Caco-2 (cell line): ENCODE measurements at regions of chr3 and their contacts with region 1.

Region 1: DNA sequence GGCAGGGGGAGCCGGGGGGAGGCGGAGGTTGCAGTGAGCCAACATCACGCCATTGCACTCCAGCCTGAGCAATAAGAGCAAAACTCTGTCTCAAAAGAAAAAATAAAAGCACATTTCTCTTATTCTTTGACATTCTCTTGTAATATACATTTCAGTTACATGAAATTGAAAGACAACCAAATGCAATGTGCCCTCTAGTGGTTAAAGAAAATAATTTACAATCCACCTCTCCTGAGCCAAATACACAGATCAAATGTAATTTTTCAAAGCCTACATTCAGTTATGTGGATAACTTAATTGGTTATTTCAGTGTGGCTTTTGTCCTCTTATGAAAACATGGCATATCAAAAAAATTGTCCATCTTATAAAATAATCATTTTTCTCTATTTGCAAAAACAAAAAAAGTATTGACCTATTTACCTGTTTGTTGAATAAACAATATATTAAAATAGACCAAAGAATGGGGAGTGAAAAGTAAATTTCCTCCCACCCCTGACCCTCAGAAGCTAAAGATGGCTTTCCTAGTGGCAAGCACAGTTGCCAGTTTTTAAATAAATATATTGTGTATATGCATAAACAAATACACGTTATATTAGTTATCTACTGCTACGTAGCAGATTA is 14.2 kb upstream of the U2SURP start:
- DNase-seq: no peak
- H3K4me3 ChIP-seq: no peak overlapping the region
- H3K4me3 Mint-ChIP-seq: no peak overlapping the region
- H3K27ac Mint-ChIP-seq: no peak overlapping the region
- H3K4me1 ChIP-seq: no peaks in the 10 kb centered on the region
- H3K4me1 Mint-ChIP-seq: no peaks in the 10 kb centered on the region
- H3K27me3 ChIP-seq: no peaks in the 10 kb centered on the region
- H3K27me3 Mint-ChIP-seq: peaks cover 10% of the 10 kb centered on the region
- CTCF ChIP-seq: peak; percentile 44 to 63

Region 2: GRCh38 chr3:142929109-142929508 is 58.1 kb before region 1 on chr3:
- CTCF ChIA-PET with region 1: no interaction called
- POLR2A ChIA-PET with region 1: no interaction called
- intact Hi-C with region 1: loop called (anchors 1 kb)
- DNase-seq: peak; percentile 61 to 62
- H3K4me3 ChIP-seq: no peak overlapping the region
- H3K4me3 Mint-ChIP-seq: no peak overlapping the region
- H3K27ac Mint-ChIP-seq: no peak overlapping the region
- H3K4me1 ChIP-seq: no peaks in the 10 kb centered on the region
- H3K4me1 Mint-ChIP-seq: no peaks in the 10 kb centered on the region
- H3K27me3 ChIP-seq: no peaks in the 10 kb centered on the region; the same call in none of the 2 replicates
- H3K27me3 Mint-ChIP-seq: peaks cover 8% of the 10 kb centered on the region
- CTCF ChIP-seq: peak; percentile 45 to 54

Region 3: DNA sequence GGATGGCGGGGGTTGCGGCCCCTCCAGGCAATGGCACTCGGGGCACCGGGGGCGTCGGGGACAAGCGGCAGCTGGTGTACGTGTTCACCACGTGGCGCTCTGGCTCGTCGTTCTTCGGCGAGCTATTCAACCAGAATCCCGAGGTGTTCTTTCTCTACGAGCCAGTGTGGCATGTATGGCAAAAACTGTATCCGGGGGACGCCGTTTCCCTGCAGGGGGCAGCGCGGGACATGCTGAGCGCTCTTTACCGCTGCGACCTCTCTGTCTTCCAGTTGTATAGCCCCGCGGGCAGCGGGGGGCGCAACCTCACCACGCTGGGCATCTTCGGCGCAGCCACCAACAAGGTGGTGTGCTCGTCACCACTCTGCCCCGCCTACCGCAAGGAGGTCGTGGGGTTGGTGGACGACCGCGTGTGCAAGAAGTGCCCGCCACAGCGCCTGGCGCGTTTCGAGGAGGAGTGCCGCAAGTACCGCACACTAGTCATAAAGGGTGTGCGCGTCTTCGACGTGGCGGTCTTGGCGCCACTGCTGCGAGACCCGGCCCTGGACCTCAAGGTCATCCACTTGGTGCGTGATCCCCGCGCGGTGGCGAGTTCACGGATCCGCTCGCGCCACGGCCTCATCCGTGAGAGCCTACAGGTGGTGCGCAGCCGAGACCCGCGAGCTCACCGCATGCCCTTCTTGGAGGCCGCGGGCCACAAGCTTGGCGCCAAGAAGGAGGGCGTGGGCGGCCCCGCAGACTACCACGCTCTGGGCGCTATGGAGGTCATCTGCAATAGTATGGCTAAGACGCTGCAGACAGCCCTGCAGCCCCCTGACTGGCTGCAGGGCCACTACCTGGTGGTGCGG is 134.3 kb after region 1 on chr3:
- CTCF ChIA-PET with region 1: no interaction called
- POLR2A ChIA-PET with region 1: no interaction called
- intact Hi-C with region 1: no loop called
- DNase-seq: no peak
- H3K4me3 ChIP-seq: no peak overlapping the region
- H3K4me3 Mint-ChIP-seq: no peak overlapping the region
- H3K27ac Mint-ChIP-seq: no peak overlapping the region
- H3K4me1 ChIP-seq: no peaks in the 10 kb centered on the region
- H3K4me1 Mint-ChIP-seq: no peaks in the 10 kb centered on the region
- H3K27me3 ChIP-seq: no peaks in the 10 kb centered on the region; the same call in 1 of the 2 replicates
- H3K27me3 Mint-ChIP-seq: peaks cover 31% of the 10 kb centered on the region
- CTCF ChIP-seq: no peak

Region 4: GRCh38 chr3:143276592-143276991 is 289.4 kb after region 1 on chr3:
- CTCF ChIA-PET with region 1: no interaction called
- POLR2A ChIA-PET with region 1: no interaction called
- intact Hi-C with region 1: no loop called
- DNase-seq: no peak
- H3K4me3 ChIP-seq: no peak overlapping the region
- H3K4me3 Mint-ChIP-seq: no peak overlapping the region
- H3K27ac Mint-ChIP-seq: no peak overlapping the region
- H3K4me1 ChIP-seq: no peaks in the 10 kb centered on the region
- H3K4me1 Mint-ChIP-seq: no peaks in the 10 kb centered on the region
- H3K27me3 ChIP-seq: no peaks in the 10 kb centered on the region; the same call in 1 of the 2 replicates
- H3K27me3 Mint-ChIP-seq: peaks cover 10% of the 10 kb centered on the region
- CTCF ChIP-seq: no peak